A549 (cell line): ENCODE measurements at regions of chr14 and their contacts with region 1.

Region 1: GRCh38 chr14:26765768-26766520 is 168.1 kb upstream of the NOVA1 start:
- DNase-seq: peak in 1 of 2 experiments; percentile 81
- ATAC-seq: peak; percentile 90 to 96
- H3K4me3 ChIP-seq: no peak overlapping the region
- H3K27ac ChIP-seq: peak overlapping the region; percentile 68 to 75
- H3K4me1 ChIP-seq: peaks cover 28% of the 10 kb centered on the region
- CTCF ChIP-seq: no peak
- EP300 ChIP-seq: peak; percentile 81 to 86; a peak in 4 of 5 replicates
- POLR2A ChIP-seq: no peak
- RAD21 ChIP-seq: peak in 1 of 2 experiments; percentile 66; a peak in 3 of 5 replicates

Region 2: GRCh38 chr14:26841920-26842741 is 76.2 kb after region 1 on chr14:
- CTCF ChIA-PET with region 1: interaction called, 3 read pairs
- POLR2A ChIA-PET with region 1: interaction called, 10 read pairs
- DNase-seq: peak; percentile 34 to 96
- ATAC-seq: peak; percentile 95 to 96
- H3K4me3 ChIP-seq: no peak overlapping the region
- H3K27ac ChIP-seq: peak overlapping the region; percentile 84 to 85
- H3K4me1 ChIP-seq: peaks cover 66% of the 10 kb centered on the region
- CTCF ChIP-seq: no peak
- EP300 ChIP-seq: peak; percentile 89; a peak in 4 of 5 replicates
- POLR2A ChIP-seq: no peak
- RAD21 ChIP-seq: peak; percentile 39 to 66; a peak in 4 of 5 replicates

Region 3: GRCh38 chr14:26935733-26936132 is 169.8 kb after region 1 on chr14:
- CTCF ChIA-PET with region 1: no interaction called
- POLR2A ChIA-PET with region 1: no interaction called
- DNase-seq: no peak
- ATAC-seq: no peak
- H3K4me3 ChIP-seq: no peak overlapping the region
- H3K27ac ChIP-seq: no peak overlapping the region
- H3K4me1 ChIP-seq: peaks cover 11% of the 10 kb centered on the region; the same call in 2 of the 3 replicates
- CTCF ChIP-seq: no peak
- EP300 ChIP-seq: no peak
- POLR2A ChIP-seq: no peak
- RAD21 ChIP-seq: no peak